WTC11 (cell line): ENCODE measurements at regions of chr1 and their contacts with region 1.

Region 1: GRCh38 chr1:12275369-12275768 is 45.5 kb downstream of the VPS13D start:
- DNase-seq: peak; percentile 60
- ATAC-seq: peak; percentile 74
- H3K4me3 Mint-ChIP-seq: no peak overlapping the region
- H3K27ac Mint-ChIP-seq: no peak overlapping the region
- H3K4me1 Mint-ChIP-seq: peaks cover 6% of the 10 kb centered on the region
- H3K27me3 Mint-ChIP-seq: no peaks in the 10 kb centered on the region
- CTCF ChIP-seq: peak; percentile 57

Region 2: GRCh38 chr1:12208764-12209494 is 66.4 kb before region 1 on chr1:
- CTCF ChIA-PET with region 1: interaction called, 13 read pairs
- POLR2A ChIA-PET with region 1: no interaction called
- DNase-seq: peak; percentile 95
- ATAC-seq: peak; percentile 92
- H3K4me3 Mint-ChIP-seq: no peak overlapping the region
- H3K27ac Mint-ChIP-seq: no peak overlapping the region
- H3K4me1 Mint-ChIP-seq: peaks cover 25% of the 10 kb centered on the region
- H3K27me3 Mint-ChIP-seq: peaks cover 3% of the 10 kb centered on the region; the same call in 1 of the 2 replicates
- CTCF ChIP-seq: peak; percentile 93

Region 3: DNA sequence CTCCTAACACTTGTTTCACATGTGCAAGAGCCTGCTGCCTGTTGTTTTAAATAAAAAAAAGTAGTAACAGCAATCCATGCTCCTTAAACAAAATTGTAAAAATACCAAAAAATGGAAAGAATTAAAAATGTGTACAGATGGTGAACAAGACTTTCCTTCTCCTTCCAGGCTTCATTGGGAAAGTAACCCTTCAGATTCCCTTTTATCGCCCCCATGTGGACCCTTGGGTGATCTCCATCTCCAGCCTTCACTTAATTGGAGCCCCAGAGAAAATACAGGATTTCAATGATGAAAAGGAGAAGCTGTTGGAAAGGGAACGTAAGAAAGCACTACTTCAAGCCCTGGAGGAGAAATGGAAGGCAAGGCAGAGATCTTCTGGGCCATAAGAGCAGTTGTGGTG is 31.3 kb before region 1 on chr1:
- CTCF ChIA-PET with region 1: interaction called, 26 read pairs
- POLR2A ChIA-PET with region 1: no interaction called
- DNase-seq: peak; percentile 25
- ATAC-seq: peak; percentile 52; the same call in 1 of the 2 replicates
- H3K4me3 Mint-ChIP-seq: no peak overlapping the region
- H3K27ac Mint-ChIP-seq: peak overlapping the region; percentile 51; the same call in 1 of the 2 replicates
- H3K4me1 Mint-ChIP-seq: peaks cover 34% of the 10 kb centered on the region
- H3K27me3 Mint-ChIP-seq: no peaks in the 10 kb centered on the region
- CTCF ChIP-seq: peak; percentile 23; the same call in 1 of the 2 replicates

Region 4: GRCh38 chr1:12296623-12297022 is 21.3 kb after region 1 on chr1:
- CTCF ChIA-PET with region 1: interaction called, 37 read pairs
- POLR2A ChIA-PET with region 1: no interaction called
- DNase-seq: no peak
- ATAC-seq: no peak
- H3K4me3 Mint-ChIP-seq: no peak overlapping the region
- H3K27ac Mint-ChIP-seq: no peak overlapping the region
- H3K4me1 Mint-ChIP-seq: no peaks in the 10 kb centered on the region; the same call in 1 of the 2 replicates
- H3K27me3 Mint-ChIP-seq: no peaks in the 10 kb centered on the region
- CTCF ChIP-seq: no peak

Region 5: GRCh38 chr1:12422488-12422887 is 147.1 kb after region 1 on chr1:
- CTCF ChIA-PET with region 1: interaction called, 10 read pairs
- POLR2A ChIA-PET with region 1: no interaction called
- DNase-seq: no peak
- ATAC-seq: no peak
- H3K4me3 Mint-ChIP-seq: no peak overlapping the region
- H3K27ac Mint-ChIP-seq: no peak overlapping the region
- H3K4me1 Mint-ChIP-seq: peaks cover 8% of the 10 kb centered on the region
- H3K27me3 Mint-ChIP-seq: no peaks in the 10 kb centered on the region
- CTCF ChIP-seq: no peak

Region 6: DNA sequence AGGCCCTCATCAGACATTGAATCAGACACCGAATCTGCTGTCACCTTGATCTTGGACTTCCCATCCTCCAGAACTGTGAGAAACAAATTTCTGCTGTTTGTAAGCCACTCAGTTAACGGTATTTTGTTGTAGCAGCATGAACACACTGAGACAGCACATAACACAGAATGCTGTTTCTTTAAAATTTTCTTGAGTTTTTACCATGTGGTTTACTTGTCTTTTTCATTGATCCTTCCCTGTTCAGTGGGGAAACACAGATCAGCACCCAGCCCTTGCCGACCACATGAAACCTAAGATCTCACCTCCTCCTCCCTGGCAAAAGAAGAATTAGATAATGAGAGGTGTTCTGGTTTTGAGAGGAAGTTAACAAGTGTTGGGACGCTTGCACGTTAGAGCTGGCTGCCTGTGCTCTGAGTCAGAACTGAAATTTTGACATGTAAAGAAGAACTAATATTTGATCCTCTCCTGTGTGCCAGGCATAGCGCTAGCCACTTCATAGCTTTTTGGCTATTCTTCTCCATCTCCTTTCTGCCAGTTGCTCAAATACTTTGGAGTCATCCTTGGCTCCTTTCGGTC is 163.1 kb after region 1 on chr1:
- CTCF ChIA-PET with region 1: no interaction called
- POLR2A ChIA-PET with region 1: no interaction called
- DNase-seq: no peak
- ATAC-seq: no peak
- H3K4me3 Mint-ChIP-seq: no peak overlapping the region
- H3K27ac Mint-ChIP-seq: no peak overlapping the region
- H3K4me1 Mint-ChIP-seq: peaks cover 22% of the 10 kb centered on the region
- H3K27me3 Mint-ChIP-seq: no peaks in the 10 kb centered on the region
- CTCF ChIP-seq: no peak

Region 7: DNA sequence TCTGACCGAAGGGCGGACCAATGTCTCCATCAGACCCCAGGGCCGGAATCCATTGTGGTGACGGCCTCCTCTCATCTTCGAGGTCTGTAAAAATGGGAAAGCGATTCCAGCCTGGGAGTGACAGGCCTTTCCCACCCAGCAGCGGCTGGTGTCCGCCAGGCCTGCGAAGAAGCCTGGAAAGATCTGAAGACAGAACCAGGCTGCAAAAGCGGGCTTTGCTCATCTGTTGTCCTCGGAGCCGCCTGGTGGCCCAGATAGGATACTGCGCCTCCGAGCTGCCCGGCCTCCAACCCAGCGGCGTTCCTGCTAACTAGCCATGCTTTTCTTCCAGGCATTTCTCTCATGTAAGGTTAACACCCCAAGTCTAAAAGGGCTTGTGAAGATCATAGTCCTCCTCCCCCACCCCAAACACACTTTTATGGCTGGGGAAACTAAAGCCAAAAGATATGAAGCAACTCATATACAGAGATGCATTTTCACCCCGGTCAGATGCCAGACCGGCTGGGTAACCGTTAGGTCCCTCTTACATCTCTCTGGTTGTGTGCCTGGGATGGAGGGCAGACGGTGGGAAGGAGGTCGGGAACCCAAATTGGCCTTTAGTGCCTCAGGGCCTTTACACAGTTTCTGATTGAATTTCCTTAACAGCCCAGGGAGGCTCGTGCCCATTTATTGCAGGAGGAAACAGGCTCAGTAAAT is 344.6 kb after region 1 on chr1:
- CTCF ChIA-PET with region 1: interaction called, 34 read pairs
- POLR2A ChIA-PET with region 1: no interaction called
- DNase-seq: peak; percentile 88
- ATAC-seq: peak; percentile 35
- H3K4me3 Mint-ChIP-seq: peak overlapping the region; percentile 98
- H3K27ac Mint-ChIP-seq: no peak overlapping the region
- H3K4me1 Mint-ChIP-seq: peaks cover 53% of the 10 kb centered on the region
- H3K27me3 Mint-ChIP-seq: no peaks in the 10 kb centered on the region
- CTCF ChIP-seq: peak; percentile 93